Activated CD4-positive, alpha-beta T cell treated with anti-CD3 and anti-CD28 coated beads, Interleukin-2, amount 10 ng/mL, durations not matched to agents 7 days and 5 days (primary cell): ENCODE measurements at regions of chr1 and their contacts with region 1.

Region 1: GRCh38 chr1:36149237-36149972 is at the start of gene TRAPPC3:
- DNase-seq: peak; percentile 99
- H3K4me3 Mint-ChIP-seq: peak within 1 kb of the TSS; percentile 97
- H3K27ac Mint-ChIP-seq: peak within 1 kb of the TSS; percentile 98
- H3K4me1 Mint-ChIP-seq: peaks cover 67% of the 10 kb centered on the region
- H3K27me3 Mint-ChIP-seq: no peaks in the 10 kb centered on the region
- total RNA-seq, gene TRAPPC3: 57.5 to 59.3 TPM

Region 2: DNA sequence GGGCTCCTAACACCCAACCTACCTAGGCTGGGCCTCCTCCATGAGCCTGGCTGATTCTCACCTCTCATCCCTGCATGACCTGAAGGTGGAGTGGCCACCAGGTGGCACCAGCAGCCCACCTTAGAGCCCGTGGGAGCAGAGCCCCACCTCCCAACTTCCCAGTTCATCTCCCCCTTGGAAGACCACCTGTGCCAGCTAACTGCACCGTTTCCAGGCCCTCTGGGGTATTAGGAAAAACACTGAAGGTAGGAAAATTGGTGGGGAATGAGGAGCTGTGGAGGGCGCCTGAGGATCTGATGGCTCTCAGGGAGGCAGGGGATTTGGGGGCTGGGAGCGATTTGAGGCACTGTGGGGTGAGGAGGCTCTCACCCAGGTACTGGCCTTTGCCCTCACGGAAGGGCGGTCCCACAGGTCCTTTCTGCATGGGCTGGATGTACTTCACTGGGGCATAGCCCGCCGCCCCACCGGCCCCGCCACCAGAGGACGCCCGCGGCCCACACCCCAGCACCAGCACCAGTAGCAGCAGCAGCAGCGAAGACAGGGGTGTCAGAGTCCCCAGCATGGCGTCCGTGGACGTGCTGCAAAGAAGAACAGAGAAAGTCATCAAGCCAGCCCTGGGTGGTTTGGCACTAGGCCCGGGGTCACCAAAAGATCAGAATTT is 49.6 kb before region 1 on chr1:
- CTCF ChIA-PET with region 1: interaction called, 10 read pairs
- POLR2A ChIA-PET with region 1: no interaction called
- DNase-seq: peak; percentile 81
- H3K4me3 Mint-ChIP-seq: no peak overlapping the region
- H3K27ac Mint-ChIP-seq: no peak overlapping the region
- H3K4me1 Mint-ChIP-seq: peaks cover 3% of the 10 kb centered on the region
- H3K27me3 Mint-ChIP-seq: no peaks in the 10 kb centered on the region

Region 3: DNA sequence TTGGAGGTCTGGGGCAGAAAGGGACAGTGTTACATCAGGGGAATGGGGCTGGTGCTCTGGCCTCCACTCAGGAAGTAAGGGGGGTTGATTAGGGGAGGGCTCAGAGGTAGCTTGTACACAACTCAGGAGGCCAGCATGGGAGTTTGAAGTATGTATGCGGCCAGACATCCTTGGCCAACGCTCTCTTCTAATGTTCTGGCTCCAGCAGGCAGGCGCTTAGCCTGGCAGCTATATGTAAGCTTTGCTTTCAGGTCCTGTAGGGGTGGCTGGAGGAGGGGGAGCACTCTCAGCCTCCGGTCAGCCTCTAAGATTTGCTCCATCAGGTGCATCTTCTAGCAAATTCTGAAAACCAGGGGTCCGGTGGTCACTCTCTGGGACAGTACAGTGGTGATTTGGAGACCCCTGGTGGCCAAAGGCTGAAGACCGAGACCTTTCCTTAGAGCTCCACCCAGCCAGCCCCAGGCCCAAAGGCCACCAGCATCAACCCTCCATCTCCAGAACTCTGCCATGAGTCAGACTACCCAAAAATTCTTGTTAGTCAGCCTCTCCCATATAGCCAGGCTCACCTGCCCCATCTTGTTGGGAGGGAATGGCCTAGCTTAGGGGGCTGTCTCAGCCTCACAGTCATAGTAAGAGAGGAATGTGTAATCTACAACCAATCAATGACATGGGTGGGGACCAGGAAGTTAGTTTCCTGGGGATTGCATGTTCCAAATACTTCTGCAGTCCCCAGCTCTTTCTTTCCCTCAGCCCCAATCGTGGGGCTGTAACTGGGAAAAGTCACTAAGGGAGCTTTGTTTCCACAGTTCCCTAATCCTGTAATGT is 14.7 kb before region 1 on chr1:
- CTCF ChIA-PET with region 1: interaction called, 27 read pairs
- POLR2A ChIA-PET with region 1: no interaction called
- DNase-seq: peak; percentile 46
- H3K4me3 Mint-ChIP-seq: no peak overlapping the region
- H3K27ac Mint-ChIP-seq: no peak overlapping the region
- H3K4me1 Mint-ChIP-seq: peaks cover 11% of the 10 kb centered on the region
- H3K27me3 Mint-ChIP-seq: no peaks in the 10 kb centered on the region

Region 4: GRCh38 chr1:36175137-36176095 is 26.0 kb after region 1 on chr1:
- CTCF ChIA-PET with region 1: interaction called, 10 read pairs
- POLR2A ChIA-PET with region 1: no interaction called
- DNase-seq: no peak
- H3K4me3 Mint-ChIP-seq: no peak overlapping the region
- H3K27ac Mint-ChIP-seq: no peak overlapping the region
- H3K4me1 Mint-ChIP-seq: no peaks in the 10 kb centered on the region
- H3K27me3 Mint-ChIP-seq: no peaks in the 10 kb centered on the region

Region 5: GRCh38 chr1:36208978-36209703 is 59.7 kb after region 1 on chr1:
- CTCF ChIA-PET with region 1: no interaction called
- POLR2A ChIA-PET with region 1: no interaction called
- DNase-seq: no peak
- H3K4me3 Mint-ChIP-seq: no peak overlapping the region
- H3K27ac Mint-ChIP-seq: no peak overlapping the region
- H3K4me1 Mint-ChIP-seq: peaks cover 12% of the 10 kb centered on the region
- H3K27me3 Mint-ChIP-seq: no peaks in the 10 kb centered on the region

Region 6: GRCh38 chr1:36223993-36224536 is 74.7 kb after region 1 on chr1 and contains the start of gene THRAP3:
- CTCF ChIA-PET with region 1: interaction called, 12 read pairs
- POLR2A ChIA-PET with region 1: no interaction called
- DNase-seq: peak; percentile 99
- H3K4me3 Mint-ChIP-seq: peak within 1 kb of the TSS; percentile 87
- H3K27ac Mint-ChIP-seq: peak within 1 kb of the TSS; percentile 99
- H3K4me1 Mint-ChIP-seq: peaks cover 25% of the 10 kb centered on the region
- H3K27me3 Mint-ChIP-seq: no peaks in the 10 kb centered on the region
- total RNA-seq, gene THRAP3: 142 to 167 TPM

Region 7: GRCh38 chr1:36285448-36286101 is 136.2 kb after region 1 on chr1:
- CTCF ChIA-PET with region 1: interaction called, 32 read pairs
- POLR2A ChIA-PET with region 1: interaction called, 4 read pairs
- DNase-seq: peak; percentile 83
- H3K4me3 Mint-ChIP-seq: no peak overlapping the region
- H3K27ac Mint-ChIP-seq: peak overlapping the region; percentile 76
- H3K4me1 Mint-ChIP-seq: peaks cover 17% of the 10 kb centered on the region
- H3K27me3 Mint-ChIP-seq: no peaks in the 10 kb centered on the region